ENCODE measurements at regions of chr12 and their contacts with region 1.

Region 1: GRCh38 chr12:6867413-6868210 is at the start of gene TPI1:
- DNase-seq: no peak
- H3K4me3 ChIP-seq: peak within 1 kb of the TSS; percentile 96
- CTCF ChIP-seq: no peak

Region 2: DNA sequence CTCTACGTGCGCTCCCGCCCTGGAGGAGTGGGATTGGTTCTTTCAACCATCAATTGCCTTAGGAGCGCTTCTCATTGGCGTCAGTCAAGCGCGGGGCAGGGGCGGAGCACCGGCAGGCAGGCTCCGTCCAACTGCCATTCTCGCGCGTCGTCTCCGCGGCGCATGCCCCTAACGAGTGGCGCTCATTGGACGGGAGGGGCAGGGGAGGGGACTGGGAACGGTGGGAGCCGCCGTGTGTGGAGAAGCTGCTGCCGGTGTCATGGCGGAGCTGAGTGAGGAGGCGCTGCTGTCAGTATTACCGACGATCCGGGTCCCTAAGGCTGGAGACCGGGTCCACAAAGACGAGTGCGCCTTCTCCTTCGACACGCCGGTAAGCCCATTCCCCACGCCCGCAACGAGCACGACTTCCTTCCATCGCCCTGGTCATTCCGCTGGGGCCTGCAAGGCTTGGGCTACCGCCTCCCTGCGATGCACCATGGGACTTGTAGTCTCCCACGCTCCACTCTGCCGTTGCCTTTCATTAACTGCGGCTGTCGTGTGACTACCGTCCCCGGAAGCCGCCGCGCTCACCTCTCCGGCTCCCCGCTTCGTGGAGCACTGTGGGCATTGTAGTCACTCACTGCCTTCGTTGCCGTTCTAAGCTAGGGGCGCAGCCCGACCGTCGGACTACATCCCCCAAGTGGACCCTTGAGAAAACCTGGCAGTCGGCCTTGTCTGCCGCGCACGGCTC is 15.5 kb before region 1 on chr12 and contains the start of gene USP5:
- CTCF ChIA-PET with region 1: interaction called, 63 read pairs
- POLR2A ChIA-PET with region 1: interaction called, 164 read pairs
- DNase-seq: peak; percentile 97
- H3K4me3 ChIP-seq: peak within 1 kb of the TSS; percentile 98
- CTCF ChIP-seq: no peak

Region 3: DNA sequence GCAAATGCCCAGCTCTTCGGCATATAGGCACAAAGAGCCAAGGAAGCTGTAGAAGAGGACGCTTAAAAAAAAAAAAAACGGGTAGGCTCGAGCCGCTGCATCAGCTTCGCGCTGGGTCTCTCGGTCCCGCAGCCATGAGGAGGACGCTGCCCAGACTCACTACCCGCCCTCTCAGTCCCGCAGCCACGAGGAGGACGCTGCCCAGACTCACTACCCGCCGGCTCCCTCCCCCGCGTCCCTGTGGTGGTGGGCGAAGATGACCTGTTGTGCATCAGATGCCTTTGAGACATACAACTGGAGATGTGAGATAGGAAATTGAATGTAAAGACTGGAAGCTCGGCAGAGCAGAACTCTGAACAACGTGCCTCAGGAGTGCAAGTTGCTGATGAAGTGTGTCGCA is 16.9 kb after region 1 on chr12:
- CTCF ChIA-PET with region 1: interaction called, 88 read pairs
- POLR2A ChIA-PET with region 1: interaction called, 11 read pairs
- DNase-seq: no peak
- H3K4me3 ChIP-seq: no peak overlapping the region
- CTCF ChIP-seq: no peak

Region 4: DNA sequence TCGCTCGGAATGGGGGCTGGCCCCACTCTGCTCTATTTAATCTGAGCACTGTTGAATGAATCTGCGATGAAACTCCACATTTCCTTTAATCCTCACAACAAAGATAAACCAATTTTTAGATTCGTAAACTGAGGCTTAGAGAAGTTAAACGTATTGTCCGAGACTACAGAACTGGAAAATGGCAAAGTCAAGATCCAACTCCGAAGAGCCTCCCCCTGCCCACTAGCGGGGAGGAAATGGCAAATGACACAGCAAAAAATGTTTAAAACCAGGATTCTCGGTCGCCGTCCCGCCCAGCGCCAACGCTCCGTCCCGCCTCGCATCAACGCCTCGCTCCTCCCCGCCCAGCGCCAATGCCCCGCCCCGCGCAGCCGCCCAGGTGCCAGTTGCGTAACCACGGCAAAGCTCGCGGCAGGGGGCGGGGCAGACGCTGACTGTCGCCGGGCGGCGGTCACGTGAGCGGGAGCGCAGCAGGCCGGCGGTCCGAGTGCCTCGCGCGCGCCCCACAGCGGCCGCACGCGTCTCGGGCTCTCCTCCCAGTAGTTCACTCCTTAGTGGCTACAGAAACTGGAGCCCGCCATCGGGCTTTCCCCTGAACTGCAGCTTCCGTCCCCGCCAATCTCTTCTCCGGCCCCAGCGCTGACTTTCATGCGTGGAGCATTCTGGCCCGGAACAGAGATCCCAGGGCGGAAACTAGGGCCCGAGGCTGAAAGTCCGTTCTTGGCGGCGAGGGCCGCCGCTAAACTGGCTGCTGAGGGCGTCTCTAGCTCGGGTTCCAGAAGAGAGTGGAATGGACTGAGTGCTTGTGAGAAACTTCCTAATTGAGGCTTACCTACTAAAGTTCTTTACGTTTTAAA is 23.4 kb after region 1 on chr12:
- CTCF ChIA-PET with region 1: interaction called, 88 read pairs
- POLR2A ChIA-PET with region 1: interaction called, 23 read pairs
- DNase-seq: peak; percentile 47
- H3K4me3 ChIP-seq: peak overlapping the region; percentile 57
- CTCF ChIP-seq: peak; percentile 78

Region 5: DNA sequence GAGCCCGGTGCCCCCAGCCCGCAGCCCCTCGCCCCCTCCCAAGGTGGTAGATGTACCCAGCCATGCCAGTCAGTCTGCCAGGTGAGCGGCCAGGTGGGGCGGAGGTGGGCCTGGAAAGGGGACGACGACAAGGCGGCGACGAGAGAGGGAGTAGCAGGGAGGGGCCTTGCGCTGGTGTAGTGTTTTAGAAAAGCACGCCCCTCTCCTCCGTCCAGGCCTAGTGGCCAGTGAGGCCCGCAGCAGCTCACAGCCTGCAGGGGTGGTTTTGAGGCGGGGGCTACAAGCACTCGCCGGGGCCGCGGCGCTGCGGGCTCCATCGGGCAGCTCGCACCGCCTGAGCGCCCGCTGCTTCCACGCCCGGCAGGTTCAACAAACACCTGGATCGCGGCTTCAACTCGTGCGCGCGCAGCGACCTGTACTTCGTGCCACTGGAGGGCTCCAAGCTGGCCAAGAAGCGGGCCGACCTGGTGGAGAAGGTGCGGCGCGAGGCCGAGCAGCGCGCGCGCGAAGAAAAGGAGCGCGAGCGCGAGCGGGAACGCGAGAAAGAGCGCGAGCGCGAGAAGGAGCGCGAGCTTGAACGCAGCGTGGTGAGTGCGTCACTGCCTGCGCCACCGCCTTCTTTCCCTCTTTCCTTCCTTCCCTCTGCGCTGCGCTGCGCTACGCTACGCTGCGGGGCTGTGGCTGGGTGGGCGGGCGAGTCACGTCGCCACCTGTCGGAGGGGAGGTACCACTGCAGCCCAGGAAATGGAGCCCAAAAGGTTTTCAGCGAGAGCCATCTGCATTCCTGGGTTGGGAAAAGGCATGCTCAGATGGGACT is 70.1 kb after region 1 on chr12:
- CTCF ChIA-PET with region 1: interaction called, 27 read pairs
- POLR2A ChIA-PET with region 1: interaction called, 6 read pairs
- DNase-seq: no peak
- H3K4me3 ChIP-seq: peak overlapping the region; percentile 63
- CTCF ChIP-seq: peak; percentile 96

Region 6: DNA sequence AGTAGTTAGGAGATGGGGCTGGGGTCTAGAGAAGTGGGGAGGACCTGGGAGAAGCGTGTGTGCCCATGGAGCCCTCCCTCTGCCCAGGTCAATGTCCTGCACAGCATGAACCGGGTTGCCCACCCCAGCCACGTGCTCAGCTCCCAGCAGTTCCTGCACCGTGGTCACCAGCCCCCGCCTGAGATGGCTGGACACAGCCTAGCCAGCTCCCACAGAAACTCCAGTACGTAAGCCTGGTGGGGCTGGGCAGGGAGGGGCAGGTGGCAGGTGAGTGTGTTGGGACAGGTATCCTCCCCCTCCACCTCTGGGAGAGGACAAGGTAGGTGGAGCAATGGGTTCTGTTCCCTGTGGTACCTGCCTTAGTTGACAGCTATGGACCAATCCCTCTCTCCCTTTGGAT is 283.2 kb after region 1 on chr12:
- CTCF ChIA-PET with region 1: no interaction called
- POLR2A ChIA-PET with region 1: no interaction called
- DNase-seq: no peak
- H3K4me3 ChIP-seq: no peak overlapping the region
- CTCF ChIP-seq: no peak

Measured in AG04449 (cell line).